Ovary (tissue), 10 donors: ENCODE measurements at regions of chr16 and their contacts with region 1.

Region 1: DNA sequence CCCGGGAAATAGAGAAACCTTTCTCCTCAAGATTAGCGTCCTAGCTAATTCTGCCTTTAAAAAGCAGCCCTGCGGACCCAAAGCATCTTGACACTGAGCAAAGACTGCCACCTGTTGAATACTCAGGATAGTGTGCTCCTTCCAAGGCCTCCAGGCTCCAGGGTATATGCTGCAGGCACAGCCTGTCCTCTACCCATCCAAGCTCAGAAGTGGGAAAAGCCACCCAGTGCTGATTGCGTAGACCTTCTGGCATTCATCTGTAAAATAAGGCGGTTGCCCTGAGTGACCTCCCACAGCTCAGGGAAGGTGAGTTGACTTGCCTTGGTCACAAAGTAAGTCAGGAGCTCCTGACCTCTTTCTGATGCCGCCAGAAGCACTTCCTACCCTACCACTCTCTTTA is 456.1 kb upstream of the DYNLRB2 start:
- DNase-seq: peak; percentile 59 to 73 (median 64)
- H3K4me3 ChIP-seq: no peak overlapping the region
- H3K27ac ChIP-seq: no peak overlapping the region
- H3K4me1 ChIP-seq: peaks cover 1% of the 10 kb centered on the region
- H3K27me3 ChIP-seq: no peaks in the 10 kb centered on the region
- CTCF ChIP-seq: peak; percentile 64 to 71 (median 66)
- EP300 ChIP-seq: no peak
- POLR2A ChIP-seq: no peak

Region 2: GRCh38 chr16:78227855-78228254 is 1856.8 kb before region 1 on chr16:
- intact Hi-C with region 1: loop called in 1 of 4 experiments (anchors 10 kb)
- DNase-seq: peak in 1 of 5 donors; percentile 32
- H3K4me3 ChIP-seq: no peak overlapping the region
- H3K27ac ChIP-seq: no peak overlapping the region
- H3K4me1 ChIP-seq: peaks cover 7% of the 10 kb centered on the region
- H3K27me3 ChIP-seq: no peaks in the 10 kb centered on the region
- CTCF ChIP-seq: peak in 2 of 3 donors; percentile 26 to 28
- EP300 ChIP-seq: no peak
- POLR2A ChIP-seq: no peak